Body of pancreas (tissue), 4 donors: ENCODE measurements at regions of chr10 and their contacts with region 1.

Region 1: GRCh38 chr10:75099952-75100763 is 11.3 kb upstream of the SAMD8 start:
- DNase-seq: peak; percentile 77 to 86 (median 82)
- ATAC-seq: peak; percentile 90
- H3K4me3 ChIP-seq: no peak overlapping the region
- H3K27ac ChIP-seq: no peak overlapping the region
- H3K4me1 ChIP-seq: peaks cover 6% of the 10 kb centered on the region
- H3K27me3 ChIP-seq: no peaks in the 10 kb centered on the region
- CTCF ChIP-seq: peak; percentile 91 to 99 (median 96)
- POLR2A ChIP-seq: no peak

Region 2: DNA sequence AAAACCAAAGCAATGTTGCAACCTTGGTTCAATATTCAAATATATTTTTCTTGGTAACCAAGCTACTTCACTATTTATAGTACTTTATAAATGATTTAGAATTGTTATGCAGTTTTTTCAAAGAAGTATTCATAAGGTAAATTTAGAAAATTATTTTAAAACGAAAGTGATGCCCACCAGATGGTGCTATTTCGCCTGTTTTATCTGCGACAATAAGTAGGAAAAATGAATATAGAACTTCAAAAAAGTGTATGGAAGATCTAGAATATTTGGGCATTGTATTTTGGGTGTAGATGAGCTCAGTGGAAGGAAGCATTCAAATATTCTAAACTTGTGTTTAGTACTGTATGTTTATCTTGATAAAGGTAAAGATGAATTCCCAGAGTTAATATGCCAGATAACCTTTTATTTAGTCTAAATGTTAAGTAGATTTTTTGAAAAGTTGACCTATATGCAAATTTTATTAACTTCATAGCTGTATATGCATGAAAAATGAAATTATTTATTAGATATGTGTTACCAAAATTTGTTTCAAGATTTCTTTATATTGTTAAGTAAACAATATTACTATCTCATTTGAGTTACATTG is 856.0 kb before region 1 on chr10:
- intact Hi-C with region 1: loop called (anchors 10 kb)
- DNase-seq: peak in 3 of 4 donors; percentile 33 to 43 (median 40)
- ATAC-seq: no peak
- H3K4me3 ChIP-seq: no peak overlapping the region
- H3K27ac ChIP-seq: no peak overlapping the region
- H3K4me1 ChIP-seq: peaks cover 12% of the 10 kb centered on the region
- H3K27me3 ChIP-seq: no peaks in the 10 kb centered on the region
- CTCF ChIP-seq: peak in 6 of 7 experiments; percentile 32 to 56 (median 48)
- POLR2A ChIP-seq: no peak

Region 3: DNA sequence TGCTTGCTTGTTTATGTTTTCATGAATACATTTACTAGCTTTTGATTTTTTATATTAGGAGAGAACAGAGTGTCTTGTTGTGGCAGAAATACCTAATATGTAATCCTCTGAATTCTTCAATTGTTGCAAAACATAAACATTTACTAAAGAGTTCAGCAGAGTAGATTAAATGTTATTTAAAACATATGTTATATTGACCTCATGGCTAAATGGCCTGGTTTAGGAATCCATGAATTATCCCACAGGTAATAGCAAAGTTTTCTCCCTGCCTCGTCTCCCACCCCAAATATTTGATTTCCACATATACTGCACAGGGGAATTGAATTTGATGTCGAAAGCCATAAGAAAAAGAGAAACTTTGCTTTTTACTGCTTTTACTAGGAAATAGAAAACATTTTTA is 837.3 kb before region 1 on chr10:
- intact Hi-C with region 1: loop called (anchors 10 kb)
- DNase-seq: no peak
- ATAC-seq: no peak
- H3K4me3 ChIP-seq: no peak overlapping the region
- H3K27ac ChIP-seq: no peak overlapping the region
- H3K4me1 ChIP-seq: no peaks in the 10 kb centered on the region
- H3K27me3 ChIP-seq: no peaks in the 10 kb centered on the region
- CTCF ChIP-seq: no peak
- POLR2A ChIP-seq: no peak

Region 4: GRCh38 chr10:74949434-74949833 is 150.7 kb before region 1 on chr10:
- intact Hi-C with region 1: no loop called
- DNase-seq: no peak
- ATAC-seq: no peak
- H3K4me3 ChIP-seq: no peak overlapping the region
- H3K27ac ChIP-seq: peak overlapping the region in 1 of 4 donors; percentile 12
- H3K4me1 ChIP-seq: peaks cover 33% of the 10 kb centered on the region
- H3K27me3 ChIP-seq: no peaks in the 10 kb centered on the region
- CTCF ChIP-seq: no peak
- POLR2A ChIP-seq: no peak